Astrocyte of the cerebellum (primary cell): ENCODE measurements at regions of chr11 and their contacts with region 1.

Region 1: DNA sequence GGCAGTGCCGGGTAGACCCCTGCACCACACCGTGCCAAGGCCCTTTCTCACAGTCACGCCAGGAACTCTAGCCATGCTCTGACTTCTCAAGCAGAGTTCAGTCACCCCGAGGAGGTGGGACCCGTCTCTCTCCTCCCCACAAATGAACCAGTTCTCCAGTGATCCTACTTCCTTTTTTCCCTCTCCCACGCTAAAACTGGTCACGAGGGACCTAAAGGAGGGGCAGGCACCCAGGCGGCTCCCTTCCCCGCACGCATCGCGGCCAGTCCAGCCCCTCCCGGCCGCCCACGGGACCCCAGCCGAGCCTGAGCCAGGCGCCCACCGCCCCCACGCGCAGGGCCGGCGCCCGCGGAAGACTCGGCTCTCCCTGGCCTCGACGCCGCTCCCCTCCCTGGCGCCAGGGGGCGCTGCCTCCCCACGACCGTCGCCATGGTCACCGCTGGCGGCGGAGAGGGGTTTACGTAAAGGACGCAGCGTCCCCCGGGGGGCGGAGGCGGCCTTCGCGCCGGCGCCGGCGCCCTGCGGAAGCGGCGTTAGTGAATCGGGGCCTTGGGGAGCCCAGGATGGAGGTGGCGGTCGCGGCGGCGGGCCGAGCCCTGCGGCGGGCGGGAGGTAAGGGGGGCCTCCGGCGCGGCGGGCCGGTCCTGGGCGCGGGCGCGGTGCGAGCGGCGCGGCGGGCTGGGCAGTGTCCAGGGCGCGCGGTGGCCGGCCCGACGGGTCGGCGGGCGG is at the start of gene DAGLA:
- DNase-seq: no peak
- H3K4me3 ChIP-seq: peak within 1 kb of the TSS; percentile 42
- CTCF ChIP-seq: peak; percentile 81

Region 2: GRCh38 chr11:61645179-61645868 is 34.7 kb before region 1 on chr11:
- in situ Hi-C with region 1: loop called (anchors 5 kb)
- DNase-seq: no peak
- H3K4me3 ChIP-seq: no peak overlapping the region
- CTCF ChIP-seq: no peak

Region 3: GRCh38 chr11:61752117-61752924 is 72.3 kb after region 1 on chr11 and contains the start of gene MYRF:
- in situ Hi-C with region 1: no loop called
- DNase-seq: no peak
- H3K4me3 ChIP-seq: peak within 1 kb of the TSS; percentile 42
- CTCF ChIP-seq: peak; percentile 51

Region 4: GRCh38 chr11:61874458-61874809 is 194.4 kb after region 1 on chr11:
- in situ Hi-C with region 1: no loop called
- DNase-seq: no peak
- H3K4me3 ChIP-seq: no peak overlapping the region
- CTCF ChIP-seq: no peak